AG04450 (cell line): ENCODE measurements at regions of chr1 and their contacts with region 1.

Region 1: GRCh38 chr1:186985889-186986491 is 157.2 kb downstream of the PLA2G4A start:
- DNase-seq: peak; percentile 29
- H3K4me3 ChIP-seq: no peak overlapping the region
- H3K27ac ChIP-seq: no peak overlapping the region
- H3K27me3 ChIP-seq: no peaks in the 10 kb centered on the region
- CTCF ChIP-seq: peak; percentile 76

Region 2: DNA sequence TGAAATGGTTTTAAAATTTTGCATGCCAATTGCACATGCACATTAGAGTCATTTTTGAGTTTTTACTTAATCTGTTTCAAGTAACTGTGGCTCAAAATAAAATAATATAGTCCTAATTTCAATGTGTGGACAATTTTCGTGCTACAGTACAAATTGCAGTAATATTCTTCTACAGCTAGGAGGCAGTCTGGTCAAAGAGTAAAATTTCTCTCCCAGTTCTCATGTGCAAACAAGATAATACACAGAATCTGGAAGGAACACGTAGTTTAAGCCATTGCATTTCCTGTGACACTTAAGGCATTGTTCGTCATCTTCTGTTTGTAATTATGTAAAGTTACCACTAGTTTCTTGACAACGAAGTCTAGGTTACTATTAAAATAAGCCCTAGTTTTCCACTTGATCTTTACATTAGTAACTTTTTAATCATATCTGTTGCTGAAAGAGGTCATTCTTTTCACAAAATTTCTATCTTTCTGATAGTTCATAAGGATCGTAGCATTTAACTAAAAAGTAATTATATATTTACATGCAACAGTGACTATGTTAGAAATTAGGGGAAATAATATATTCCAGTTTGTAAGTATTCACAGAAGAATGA is 581.4 kb before region 1 on chr1:
- CTCF ChIA-PET with region 1: interaction called, 15 read pairs
- POLR2A ChIA-PET with region 1: no interaction called
- DNase-seq: peak; percentile 11
- H3K4me3 ChIP-seq: no peak overlapping the region
- H3K27ac ChIP-seq: no peak overlapping the region
- H3K27me3 ChIP-seq: no peaks in the 10 kb centered on the region
- CTCF ChIP-seq: peak; percentile 79

Region 3: GRCh38 chr1:186482661-186483255 is 503.2 kb before region 1 on chr1:
- CTCF ChIA-PET with region 1: interaction called, 17 read pairs
- POLR2A ChIA-PET with region 1: no interaction called
- DNase-seq: peak; percentile 43
- H3K4me3 ChIP-seq: no peak overlapping the region
- H3K27ac ChIP-seq: no peak overlapping the region
- H3K27me3 ChIP-seq: no peaks in the 10 kb centered on the region
- CTCF ChIP-seq: peak; percentile 98

Region 4: GRCh38 chr1:186605762-186606350 is 380.1 kb before region 1 on chr1:
- CTCF ChIA-PET with region 1: interaction called, 68 read pairs
- POLR2A ChIA-PET with region 1: no interaction called
- DNase-seq: peak; percentile 11
- H3K4me3 ChIP-seq: no peak overlapping the region
- H3K27ac ChIP-seq: no peak overlapping the region
- H3K27me3 ChIP-seq: no peaks in the 10 kb centered on the region
- CTCF ChIP-seq: peak; percentile 86

Region 5: GRCh38 chr1:186915555-186915954 is 70.4 kb before region 1 on chr1:
- CTCF ChIA-PET with region 1: interaction called, 18 read pairs
- POLR2A ChIA-PET with region 1: no interaction called
- DNase-seq: no peak
- H3K4me3 ChIP-seq: no peak overlapping the region
- H3K27ac ChIP-seq: no peak overlapping the region
- H3K27me3 ChIP-seq: no peaks in the 10 kb centered on the region
- CTCF ChIP-seq: no peak